ENCODE measurements at regions of chr6 and their contacts with region 1.

Region 1: GRCh38 chr6:69936674-69937363 is 70.5 kb downstream of the COL19A1 start:
- DNase-seq: peak in 1 of 2 donors; percentile 65
- H3K4me3 ChIP-seq: no peak overlapping the region
- H3K27ac ChIP-seq: peak overlapping the region; percentile 41 to 42
- H3K4me1 ChIP-seq: no peaks in the 10 kb centered on the region
- H3K27me3 ChIP-seq: no peaks in the 10 kb centered on the region
- CTCF ChIP-seq: no peak

Region 2: DNA sequence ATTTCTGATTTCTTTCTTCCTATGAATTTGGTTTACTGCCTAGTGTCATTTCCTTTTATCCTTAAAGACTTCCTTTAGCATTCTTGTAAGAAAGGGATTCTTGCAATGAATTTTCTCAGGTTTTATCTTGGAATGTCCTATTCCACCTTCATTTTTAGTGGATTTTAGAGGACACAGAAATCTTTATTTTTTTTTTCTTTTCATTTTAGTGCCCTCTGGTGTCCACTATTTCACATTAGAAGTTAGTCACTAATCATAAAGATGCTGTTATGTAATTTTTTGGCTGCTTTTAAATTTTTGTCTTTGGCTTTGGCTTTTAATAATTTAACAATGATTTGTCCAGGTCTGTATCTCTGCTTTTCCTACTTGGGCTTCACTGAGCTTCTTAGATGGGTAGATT is 168.2 kb before region 1 on chr6:
- intact Hi-C with region 1: no loop called
- DNase-seq: no peak
- H3K4me3 ChIP-seq: no peak overlapping the region
- H3K27ac ChIP-seq: no peak overlapping the region
- H3K4me1 ChIP-seq: no peaks in the 10 kb centered on the region
- H3K27me3 ChIP-seq: no peaks in the 10 kb centered on the region
- CTCF ChIP-seq: no peak

Region 3: DNA sequence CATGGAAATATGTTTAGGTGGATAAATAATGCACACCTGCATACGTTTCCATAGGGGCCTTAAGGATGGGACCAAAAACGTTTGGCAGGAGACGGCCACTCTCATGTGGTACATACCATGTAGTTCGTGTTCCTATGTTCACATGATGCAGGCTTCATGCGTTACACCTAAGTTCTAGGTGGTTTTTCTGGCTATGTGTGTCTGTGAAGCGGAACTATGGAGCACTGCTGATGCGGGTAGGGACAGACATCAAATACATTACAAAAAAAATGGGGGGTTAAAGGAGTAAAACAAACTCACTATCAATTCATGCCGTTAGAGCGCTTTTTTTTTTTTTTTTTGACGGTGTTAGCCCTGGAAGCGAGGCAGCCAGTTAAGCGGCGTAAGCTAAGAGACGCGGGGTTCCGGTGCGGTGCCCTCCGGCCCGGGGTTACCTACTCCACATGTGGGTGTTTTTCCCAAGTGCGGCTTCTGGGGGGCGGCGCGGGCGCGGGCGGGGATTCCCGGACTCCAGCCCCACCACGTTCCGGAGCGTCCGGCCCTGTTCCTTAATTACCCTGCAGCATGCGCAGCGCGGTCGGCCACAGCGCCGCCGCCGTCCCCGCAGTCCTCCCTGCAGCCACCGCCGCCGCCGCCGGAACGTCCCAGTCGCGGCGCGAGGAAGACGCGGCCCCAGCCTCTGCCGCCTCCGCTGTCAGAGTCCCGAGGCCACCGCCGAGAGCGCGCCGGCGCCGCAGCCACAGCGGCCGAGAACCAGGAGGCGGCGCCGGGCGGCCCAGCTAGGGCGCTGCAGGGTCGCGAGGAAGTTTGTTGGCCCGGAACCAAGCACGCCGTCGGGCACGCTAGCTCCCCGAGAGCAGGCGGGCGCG is 69.8 kb before region 1 on chr6:
- intact Hi-C with region 1: loop called (anchors 2 kb)
- DNase-seq: peak in 1 of 2 donors; percentile 74
- H3K4me3 ChIP-seq: peak overlapping the region; percentile 77 to 86
- H3K27ac ChIP-seq: peak overlapping the region in 1 of 2 donors; percentile 27
- H3K4me1 ChIP-seq: peaks cover 0 to 5% of the 10 kb centered on the region in 2 donors
- H3K27me3 ChIP-seq: no peaks in the 10 kb centered on the region
- CTCF ChIP-seq: no peak

Region 4: GRCh38 chr6:70028926-70029325 is 92.1 kb after region 1 on chr6:
- intact Hi-C with region 1: no loop called
- DNase-seq: no peak
- H3K4me3 ChIP-seq: no peak overlapping the region
- H3K27ac ChIP-seq: no peak overlapping the region
- H3K4me1 ChIP-seq: no peaks in the 10 kb centered on the region
- H3K27me3 ChIP-seq: no peaks in the 10 kb centered on the region
- CTCF ChIP-seq: no peak